CD4-positive, alpha-beta T cell (primary cell): ENCODE measurements at regions of chr17 and their contacts with region 1.

Region 1: GRCh38 chr17:68435876-68436842 is 21.1 kb downstream of the WIPI1 start:
- DNase-seq: peak; percentile 74 to 92 (median 82)
- ATAC-seq: peak; percentile 80
- H3K4me3 ChIP-seq: no peak overlapping the region
- H3K4me3 Mint-ChIP-seq: peak overlapping the region; percentile 8
- H3K27ac ChIP-seq: no peak overlapping the region
- H3K27ac Mint-ChIP-seq: peak overlapping the region; percentile 95
- H3K4me1 ChIP-seq: peaks cover 40% of the 10 kb centered on the region
- H3K4me1 Mint-ChIP-seq: peaks cover 61% of the 10 kb centered on the region
- H3K27me3 ChIP-seq: no peaks in the 10 kb centered on the region
- H3K27me3 Mint-ChIP-seq: no peaks in the 10 kb centered on the region
- CTCF ChIP-seq: peak; percentile 89

Region 2: GRCh38 chr17:68172461-68172954 is 263.7 kb before region 1 on chr17:
- CTCF ChIA-PET with region 1: no interaction called
- POLR2A ChIA-PET with region 1: no interaction called
- intact Hi-C with region 1: loop called (anchors 2 kb)
- DNase-seq: peak; percentile 62 to 87 (median 72)
- ATAC-seq: peak; percentile 82
- H3K4me3 ChIP-seq: no peak overlapping the region
- H3K4me3 Mint-ChIP-seq: no peak overlapping the region
- H3K27ac ChIP-seq: no peak overlapping the region
- H3K27ac Mint-ChIP-seq: no peak overlapping the region
- H3K4me1 ChIP-seq: peaks cover 6% of the 10 kb centered on the region
- H3K4me1 Mint-ChIP-seq: peaks cover 17% of the 10 kb centered on the region
- H3K27me3 ChIP-seq: no peaks in the 10 kb centered on the region
- H3K27me3 Mint-ChIP-seq: no peaks in the 10 kb centered on the region
- CTCF ChIP-seq: peak; percentile 99

Region 3: GRCh38 chr17:68247445-68248198 is 188.5 kb before region 1 on chr17 and contains the start of gene AMZ2:
- CTCF ChIA-PET with region 1: interaction called, 9 read pairs
- POLR2A ChIA-PET with region 1: interaction called, 20 read pairs
- intact Hi-C with region 1: no loop called
- DNase-seq: peak; percentile 92 to 99 (median 96)
- ATAC-seq: peak; percentile 89
- H3K4me3 ChIP-seq: peak within 1 kb of the TSS; percentile 92
- H3K4me3 Mint-ChIP-seq: peak within 1 kb of the TSS; percentile 94
- H3K27ac ChIP-seq: peak within 1 kb of the TSS; percentile 97
- H3K27ac Mint-ChIP-seq: peak within 1 kb of the TSS; percentile 93
- H3K4me1 ChIP-seq: peaks cover 37% of the 10 kb centered on the region
- H3K4me1 Mint-ChIP-seq: peaks cover 52% of the 10 kb centered on the region
- H3K27me3 ChIP-seq: no peaks in the 10 kb centered on the region
- H3K27me3 Mint-ChIP-seq: no peaks in the 10 kb centered on the region
- CTCF ChIP-seq: no peak
- total RNA-seq, gene AMZ2: 63.0 to 64.9 TPM

Region 4: DNA sequence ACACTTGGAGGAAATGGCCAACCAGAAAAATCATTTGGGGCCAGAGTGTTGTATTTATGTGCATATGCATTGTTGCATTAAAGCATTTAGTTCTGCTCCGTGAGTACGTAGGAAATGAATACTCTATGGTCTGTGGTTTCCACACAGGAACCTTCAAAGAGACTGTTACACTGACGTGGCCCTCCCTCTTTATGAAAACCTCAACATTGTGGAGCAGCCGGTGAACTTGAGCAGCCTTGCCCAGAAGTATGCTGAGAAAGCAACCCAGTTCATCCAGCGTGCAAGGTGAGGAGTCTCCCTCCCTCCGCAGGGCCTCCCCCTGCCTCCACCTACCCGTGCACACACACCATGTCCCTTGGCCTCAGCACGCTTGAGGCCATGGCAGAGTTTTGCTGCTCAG is 79.6 kb before region 1 on chr17:
- CTCF ChIA-PET with region 1: interaction called, 8 read pairs
- POLR2A ChIA-PET with region 1: interaction called, 4 read pairs
- intact Hi-C with region 1: loop called (anchors 2 to 5 kb)
- DNase-seq: peak; percentile 41 to 91 (median 56)
- ATAC-seq: peak; percentile 94
- H3K4me3 ChIP-seq: peak overlapping the region; percentile 11
- H3K4me3 Mint-ChIP-seq: peak overlapping the region; percentile 75
- H3K27ac ChIP-seq: no peak overlapping the region
- H3K27ac Mint-ChIP-seq: peak overlapping the region; percentile 68
- H3K4me1 ChIP-seq: peaks cover 79% of the 10 kb centered on the region
- H3K4me1 Mint-ChIP-seq: peaks cover 62% of the 10 kb centered on the region
- H3K27me3 ChIP-seq: no peaks in the 10 kb centered on the region
- H3K27me3 Mint-ChIP-seq: no peaks in the 10 kb centered on the region
- CTCF ChIP-seq: no peak

Region 5: GRCh38 chr17:68457539-68458259 is 21.5 kb after region 1 on chr17:
- CTCF ChIA-PET with region 1: interaction called, 19 read pairs
- POLR2A ChIA-PET with region 1: interaction called, 24 read pairs
- intact Hi-C with region 1: loop called in 1 of 2 experiments (anchors 2 kb)
- DNase-seq: peak; percentile 95 to 99 (median 98)
- ATAC-seq: peak; percentile 93
- H3K4me3 ChIP-seq: peak overlapping the region; percentile 77
- H3K4me3 Mint-ChIP-seq: peak overlapping the region; percentile 82
- H3K27ac ChIP-seq: peak overlapping the region; percentile 43 to 59
- H3K27ac Mint-ChIP-seq: peak overlapping the region; percentile 81
- H3K4me1 ChIP-seq: peaks cover 50% of the 10 kb centered on the region
- H3K4me1 Mint-ChIP-seq: peaks cover 51% of the 10 kb centered on the region
- H3K27me3 ChIP-seq: no peaks in the 10 kb centered on the region
- H3K27me3 Mint-ChIP-seq: no peaks in the 10 kb centered on the region
- CTCF ChIP-seq: no peak

Region 6: GRCh38 chr17:68771867-68772515 is 335.8 kb after region 1 on chr17:
- CTCF ChIA-PET with region 1: no interaction called
- POLR2A ChIA-PET with region 1: no interaction called
- intact Hi-C with region 1: no loop called
- DNase-seq: peak in 3 of 14 experiments; percentile 20 to 50 (median 43)
- ATAC-seq: no peak
- H3K4me3 ChIP-seq: no peak overlapping the region
- H3K4me3 Mint-ChIP-seq: no peak overlapping the region
- H3K27ac ChIP-seq: no peak overlapping the region
- H3K27ac Mint-ChIP-seq: no peak overlapping the region
- H3K4me1 ChIP-seq: no peaks in the 10 kb centered on the region
- H3K4me1 Mint-ChIP-seq: no peaks in the 10 kb centered on the region
- H3K27me3 ChIP-seq: no peaks in the 10 kb centered on the region
- H3K27me3 Mint-ChIP-seq: no peaks in the 10 kb centered on the region
- CTCF ChIP-seq: peak; percentile 39